CD8-positive, alpha-beta T cell (primary cell): ENCODE measurements at regions of chr2 and their contacts with region 1.

Region 1: GRCh38 chr2:43131024-43131889 is 95.1 kb downstream of the ZFP36L2 start:
- DNase-seq: peak; percentile 64 to 95 (median 90)
- ATAC-seq: peak; percentile 51
- H3K4me3 ChIP-seq: peak overlapping the region; percentile 12 to 44
- H3K4me3 Mint-ChIP-seq: peak overlapping the region; percentile 60
- H3K27ac ChIP-seq: peak overlapping the region; percentile 88 to 90
- H3K27ac Mint-ChIP-seq: peak overlapping the region; percentile 100
- H3K4me1 ChIP-seq: peaks cover 97% of the 10 kb centered on the region
- H3K4me1 Mint-ChIP-seq: peaks cover 89% of the 10 kb centered on the region
- H3K27me3 ChIP-seq: no peaks in the 10 kb centered on the region
- H3K27me3 Mint-ChIP-seq: no peaks in the 10 kb centered on the region
- CTCF ChIP-seq: peak; percentile 21

Region 2: GRCh38 chr2:42944779-42945415 is 186.4 kb before region 1 on chr2:
- CTCF ChIA-PET with region 1: interaction called, 13 read pairs
- POLR2A ChIA-PET with region 1: no interaction called
- intact Hi-C with region 1: loop called (anchors 1 to 5 kb)
- DNase-seq: no peak
- ATAC-seq: no peak
- H3K4me3 ChIP-seq: no peak overlapping the region
- H3K4me3 Mint-ChIP-seq: no peak overlapping the region
- H3K27ac ChIP-seq: no peak overlapping the region
- H3K27ac Mint-ChIP-seq: no peak overlapping the region
- H3K4me1 ChIP-seq: no peaks in the 10 kb centered on the region
- H3K4me1 Mint-ChIP-seq: peaks cover 3% of the 10 kb centered on the region
- H3K27me3 ChIP-seq: no peaks in the 10 kb centered on the region
- H3K27me3 Mint-ChIP-seq: no peaks in the 10 kb centered on the region
- CTCF ChIP-seq: no peak

Region 3: DNA sequence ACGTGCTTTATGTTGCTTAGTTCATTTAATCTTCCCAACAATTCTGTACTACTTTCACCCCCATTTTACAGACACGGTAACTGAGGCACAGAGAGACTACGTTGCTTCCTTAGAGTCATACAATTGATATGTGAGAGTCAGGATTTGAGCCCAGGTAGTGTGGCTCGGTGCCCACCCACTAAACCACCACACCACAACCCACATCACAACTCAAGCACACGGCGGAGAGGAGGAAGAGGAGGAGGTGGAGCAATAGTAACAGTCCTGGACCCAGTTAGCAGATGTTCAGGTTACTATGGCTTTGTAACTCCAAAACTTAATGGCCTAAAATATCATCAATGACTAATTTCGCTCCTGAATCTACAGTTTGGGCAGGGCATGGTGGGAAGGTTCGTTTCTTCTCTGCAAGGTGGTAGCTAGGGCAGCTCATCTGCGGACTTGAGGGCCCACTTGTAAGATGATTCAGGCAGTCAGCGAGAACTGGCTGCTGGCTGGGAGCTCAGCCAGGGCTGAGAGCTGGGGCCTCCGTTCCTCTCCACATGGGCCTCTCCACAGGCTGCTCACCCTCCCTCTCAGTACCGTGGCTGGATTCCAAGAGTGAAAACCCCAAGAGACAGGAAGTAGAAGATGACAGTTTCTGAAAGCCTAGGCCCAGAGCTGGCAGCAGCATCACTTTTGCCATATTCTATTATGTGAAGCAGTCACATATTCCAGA is 71.9 kb before region 1 on chr2:
- CTCF ChIA-PET with region 1: no interaction called
- POLR2A ChIA-PET with region 1: no interaction called
- intact Hi-C with region 1: loop called in 1 of 2 experiments (anchors 5 kb)
- DNase-seq: peak; percentile 8 to 84 (median 51)
- ATAC-seq: peak; percentile 85
- H3K4me3 ChIP-seq: no peak overlapping the region
- H3K4me3 Mint-ChIP-seq: peak overlapping the region; percentile 46
- H3K27ac ChIP-seq: peak overlapping the region; percentile 36 to 46
- H3K27ac Mint-ChIP-seq: peak overlapping the region; percentile 87
- H3K4me1 ChIP-seq: peaks cover 27% of the 10 kb centered on the region
- H3K4me1 Mint-ChIP-seq: peaks cover 28% of the 10 kb centered on the region
- H3K27me3 ChIP-seq: no peaks in the 10 kb centered on the region
- H3K27me3 Mint-ChIP-seq: no peaks in the 10 kb centered on the region
- CTCF ChIP-seq: no peak

Region 4: GRCh38 chr2:43149482-43150107 is 18.3 kb after region 1 on chr2:
- CTCF ChIA-PET with region 1: interaction called, 16 read pairs
- POLR2A ChIA-PET with region 1: interaction called, 7 read pairs
- intact Hi-C with region 1: loop called in 1 of 2 experiments (anchors 2 kb)
- DNase-seq: peak in 5 of 9 experiments; percentile 43 to 67 (median 51)
- ATAC-seq: peak; percentile 66
- H3K4me3 ChIP-seq: no peak overlapping the region
- H3K4me3 Mint-ChIP-seq: peak overlapping the region; percentile 45
- H3K27ac ChIP-seq: peak overlapping the region in 1 of 2 experiments; percentile 49
- H3K27ac Mint-ChIP-seq: peak overlapping the region; percentile 91
- H3K4me1 ChIP-seq: peaks cover 67% of the 10 kb centered on the region
- H3K4me1 Mint-ChIP-seq: peaks cover 68% of the 10 kb centered on the region
- H3K27me3 ChIP-seq: no peaks in the 10 kb centered on the region
- H3K27me3 Mint-ChIP-seq: no peaks in the 10 kb centered on the region
- CTCF ChIP-seq: no peak

Region 5: GRCh38 chr2:43194121-43194869 is 63.0 kb after region 1 on chr2:
- CTCF ChIA-PET with region 1: interaction called, 7 read pairs
- POLR2A ChIA-PET with region 1: interaction called, 10 read pairs
- intact Hi-C with region 1: loop called (anchors 1 kb)
- DNase-seq: no peak
- ATAC-seq: peak; percentile 0
- H3K4me3 ChIP-seq: peak overlapping the region; percentile 40 to 52
- H3K4me3 Mint-ChIP-seq: peak overlapping the region; percentile 83
- H3K27ac ChIP-seq: peak overlapping the region; percentile 68 to 88
- H3K27ac Mint-ChIP-seq: peak overlapping the region; percentile 98
- H3K4me1 ChIP-seq: peaks cover 65% of the 10 kb centered on the region
- H3K4me1 Mint-ChIP-seq: peaks cover 61% of the 10 kb centered on the region
- H3K27me3 ChIP-seq: no peaks in the 10 kb centered on the region
- H3K27me3 Mint-ChIP-seq: no peaks in the 10 kb centered on the region
- CTCF ChIP-seq: no peak

Region 6: GRCh38 chr2:43542285-43542937 is 411.2 kb after region 1 on chr2:
- CTCF ChIA-PET with region 1: interaction called, 3 read pairs
- POLR2A ChIA-PET with region 1: no interaction called
- intact Hi-C with region 1: loop called in 1 of 2 experiments (anchors 5 kb)
- DNase-seq: peak in 2 of 9 experiments; percentile 48 to 66
- ATAC-seq: peak; percentile 88
- H3K4me3 ChIP-seq: no peak overlapping the region
- H3K4me3 Mint-ChIP-seq: no peak overlapping the region
- H3K27ac ChIP-seq: no peak overlapping the region
- H3K27ac Mint-ChIP-seq: no peak overlapping the region
- H3K4me1 ChIP-seq: no peaks in the 10 kb centered on the region
- H3K4me1 Mint-ChIP-seq: peaks cover 16% of the 10 kb centered on the region
- H3K27me3 ChIP-seq: no peaks in the 10 kb centered on the region
- H3K27me3 Mint-ChIP-seq: no peaks in the 10 kb centered on the region
- CTCF ChIP-seq: peak; percentile 87